ENCODE measurements at regions of chr4 and their contacts with region 1.

Region 1: DNA sequence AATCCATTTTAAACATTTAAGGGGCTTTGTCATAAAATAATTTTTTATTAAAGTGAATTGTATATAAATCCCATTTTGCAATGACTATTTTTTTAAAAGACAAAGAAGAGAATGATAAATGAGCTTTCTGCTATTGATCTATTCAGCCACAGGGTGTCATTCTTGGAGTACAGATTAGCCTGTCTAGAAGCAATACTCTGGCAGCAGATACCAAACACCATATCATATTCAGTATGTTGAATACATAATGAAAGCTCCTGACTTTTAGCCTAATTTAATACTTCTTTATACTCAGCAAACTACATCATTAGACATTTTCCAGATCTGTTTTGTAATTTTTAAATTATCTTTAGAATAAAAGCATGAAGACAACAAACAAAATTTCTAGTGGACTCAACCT is 496.3 kb downstream of the PDGFC start:
- DNase-seq: peak in 1 of 3 donors; percentile 4
- ATAC-seq: peak; percentile 49
- H3K4me3 ChIP-seq: no peak overlapping the region
- H3K4me1 ChIP-seq: no peaks in the 10 kb centered on the region
- CTCF ChIP-seq: no peak

Region 2: GRCh38 chr4:156515295-156515694 is 40.0 kb after region 1 on chr4:
- intact Hi-C with region 1: no loop called
- DNase-seq: no peak
- ATAC-seq: no peak
- H3K4me3 ChIP-seq: no peak overlapping the region
- H3K4me1 ChIP-seq: no peaks in the 10 kb centered on the region
- CTCF ChIP-seq: no peak

Region 3: GRCh38 chr4:156660465-156660864 is 185.1 kb after region 1 on chr4:
- intact Hi-C with region 1: loop called in 1 of 2 experiments (anchors 10 kb)
- DNase-seq: no peak
- ATAC-seq: no peak
- H3K4me3 ChIP-seq: no peak overlapping the region
- H3K4me1 ChIP-seq: no peaks in the 10 kb centered on the region
- CTCF ChIP-seq: no peak